Common myeloid progenitor, CD34-positive (primary cell): ENCODE measurements at regions of chr17 and their contacts with region 1.

Region 1: GRCh38 chr17:30116661-30117551 is at the start of gene NSRP1:
- DNase-seq: peak; percentile 94 to 96 (median 96)
- H3K4me3 ChIP-seq: peak within 1 kb of the TSS; percentile 87 to 100 (median 93)
- H3K27ac ChIP-seq: peak within 1 kb of the TSS; percentile 99
- H3K4me1 ChIP-seq: peaks cover 5 to 18% (median 12%) of the 10 kb centered on the region in 4 experiments
- H3K27me3 ChIP-seq: no peaks in the 10 kb centered on the region

Region 2: GRCh38 chr17:30062372-30062771 is 54.5 kb before region 1 on chr17:
- CTCF ChIA-PET with region 1: no interaction called
- POLR2A ChIA-PET with region 1: no interaction called
- DNase-seq: no peak
- H3K4me3 ChIP-seq: no peak overlapping the region
- H3K27ac ChIP-seq: no peak overlapping the region
- H3K4me1 ChIP-seq: no peaks in the 10 kb centered on the region
- H3K27me3 ChIP-seq: no peaks in the 10 kb centered on the region

Region 3: GRCh38 chr17:30132615-30133014 is 15.7 kb after region 1 on chr17:
- CTCF ChIA-PET with region 1: interaction called, 11 read pairs
- POLR2A ChIA-PET with region 1: no interaction called
- DNase-seq: no peak
- H3K4me3 ChIP-seq: no peak overlapping the region
- H3K27ac ChIP-seq: no peak overlapping the region
- H3K4me1 ChIP-seq: no peaks in the 10 kb centered on the region
- H3K27me3 ChIP-seq: no peaks in the 10 kb centered on the region

Region 4: GRCh38 chr17:30187573-30187972 is 70.7 kb after region 1 on chr17:
- CTCF ChIA-PET with region 1: no interaction called
- POLR2A ChIA-PET with region 1: no interaction called
- DNase-seq: no peak
- H3K4me3 ChIP-seq: no peak overlapping the region
- H3K27ac ChIP-seq: no peak overlapping the region
- H3K4me1 ChIP-seq: no peaks in the 10 kb centered on the region
- H3K27me3 ChIP-seq: no peaks in the 10 kb centered on the region

Region 5: DNA sequence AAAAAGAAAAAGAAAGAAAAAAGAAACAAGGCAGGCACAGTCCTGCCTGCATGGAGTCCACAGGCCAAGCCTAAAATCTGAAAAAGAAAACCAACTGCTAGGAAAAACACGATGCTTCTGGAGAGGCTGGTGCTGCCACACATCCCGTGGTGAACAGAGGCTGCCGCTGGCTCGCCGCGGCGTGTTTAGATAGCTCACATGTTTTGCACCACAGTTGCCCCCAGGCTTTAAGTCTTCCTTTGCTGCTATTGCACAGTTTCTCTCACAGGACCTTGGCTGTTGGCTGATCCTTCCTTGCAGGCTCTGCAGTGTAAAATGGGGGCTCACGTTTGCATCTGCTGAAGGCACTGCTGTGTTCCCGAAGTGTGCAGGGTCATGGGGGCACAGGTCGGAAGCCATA is 110.0 kb after region 1 on chr17:
- CTCF ChIA-PET with region 1: no interaction called
- POLR2A ChIA-PET with region 1: no interaction called
- DNase-seq: no peak
- H3K4me3 ChIP-seq: no peak overlapping the region
- H3K27ac ChIP-seq: no peak overlapping the region
- H3K4me1 ChIP-seq: no peaks in the 10 kb centered on the region
- H3K27me3 ChIP-seq: peaks cover 0 to 9% (median 5%) of the 10 kb centered on the region in 5 experiments